CD4-positive, alpha-beta memory T cell (primary cell): ENCODE measurements at regions of chr14 and their contacts with region 1.

Region 1: DNA sequence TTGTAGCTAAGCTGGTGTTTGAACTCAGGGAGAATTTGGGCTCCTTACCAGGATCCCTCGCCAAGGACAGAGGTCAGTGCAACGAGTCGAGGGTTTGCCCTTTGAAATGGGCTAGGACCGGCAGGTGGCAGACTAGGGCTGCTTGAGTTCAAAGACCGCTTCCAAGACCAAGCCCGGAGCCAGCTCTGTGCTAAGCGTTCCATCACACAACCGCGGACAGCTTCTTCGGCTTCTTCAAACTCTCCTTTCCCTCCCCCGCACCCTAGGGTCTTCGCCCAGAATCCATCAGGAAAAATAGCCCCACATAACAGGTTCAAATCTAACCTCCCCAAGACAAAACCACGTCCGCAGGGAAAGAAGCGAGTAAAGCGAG is 705 bp upstream of the FLVCR2 start:
- DNase-seq: peak; percentile 54 to 72 (median 62)
- H3K4me3 ChIP-seq: peak overlapping the region; percentile 60 to 94
- H3K4me3 Mint-ChIP-seq: peak overlapping the region; percentile 90 to 99 (median 95)
- H3K27ac ChIP-seq: peak overlapping the region; percentile 46
- H3K27ac Mint-ChIP-seq: peak overlapping the region; percentile 87 to 96 (median 90)
- H3K4me1 ChIP-seq: peaks cover 22% of the 10 kb centered on the region
- H3K4me1 Mint-ChIP-seq: peaks cover 9 to 15% (median 13%) of the 10 kb centered on the region in 4 donors
- H3K27me3 ChIP-seq: no peaks in the 10 kb centered on the region
- H3K27me3 Mint-ChIP-seq: no peaks in the 10 kb centered on the region

Region 2: DNA sequence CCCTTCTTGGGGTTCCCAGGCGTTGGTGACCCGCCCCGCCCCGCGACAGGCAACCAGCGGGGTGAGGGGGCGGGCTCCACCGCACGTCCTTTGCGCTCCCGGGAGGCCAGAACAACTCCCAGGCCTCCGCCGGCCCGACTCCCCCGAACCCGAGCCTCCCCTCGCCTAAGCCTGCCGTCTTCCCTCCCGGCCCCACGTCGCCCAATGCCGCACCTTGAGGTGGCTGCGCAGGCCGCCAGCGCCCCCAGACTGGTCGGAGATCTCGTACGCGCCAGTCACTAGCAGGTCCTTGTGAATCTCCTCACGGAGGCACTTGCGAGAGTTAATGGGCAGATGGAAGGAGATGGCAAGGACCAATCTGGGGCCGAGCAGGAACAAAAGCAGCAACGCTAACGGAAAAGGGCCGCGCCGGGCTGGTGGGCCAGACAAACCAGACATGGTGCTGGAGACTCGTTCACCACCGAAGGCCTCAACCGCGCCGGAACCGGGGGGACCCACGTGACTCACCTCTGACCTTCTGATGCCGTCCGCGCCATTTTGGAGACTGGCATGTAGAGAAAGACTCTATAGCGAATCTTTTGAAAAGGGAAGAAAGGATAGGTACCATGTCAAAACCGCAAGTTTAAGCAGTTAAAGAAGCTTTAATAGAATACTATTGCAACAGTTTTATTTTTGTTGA is 401.4 kb before region 1 on chr14 and contains the start of gene TMED10:
- CTCF ChIA-PET with region 1: no interaction called
- POLR2A ChIA-PET with region 1: no interaction called
- intact Hi-C with region 1: no loop called
- DNase-seq: peak; percentile 95 to 96 (median 95)
- H3K4me3 ChIP-seq: peak within 1 kb of the TSS; percentile 78 to 84
- H3K4me3 Mint-ChIP-seq: peak within 1 kb of the TSS; percentile 83 to 97 (median 94)
- H3K27ac ChIP-seq: peak within 1 kb of the TSS; percentile 99
- H3K27ac Mint-ChIP-seq: peak within 1 kb of the TSS; percentile 98 to 99 (median 98)
- H3K4me1 ChIP-seq: peaks cover 38% of the 10 kb centered on the region
- H3K4me1 Mint-ChIP-seq: peaks cover 28 to 57% (median 44%) of the 10 kb centered on the region in 4 donors
- H3K27me3 ChIP-seq: no peaks in the 10 kb centered on the region
- H3K27me3 Mint-ChIP-seq: no peaks in the 10 kb centered on the region
- total RNA-seq, gene TMED10: 202 to 217 TPM

Region 3: GRCh38 chr14:75497191-75497590 is 80.5 kb before region 1 on chr14:
- CTCF ChIA-PET with region 1: interaction called, 12 read pairs
- POLR2A ChIA-PET with region 1: interaction called, 3 read pairs
- intact Hi-C with region 1: no loop called
- DNase-seq: no peak
- H3K4me3 ChIP-seq: no peak overlapping the region
- H3K4me3 Mint-ChIP-seq: no peak overlapping the region
- H3K27ac ChIP-seq: no peak overlapping the region
- H3K27ac Mint-ChIP-seq: peak overlapping the region in 3 of 7 donors; percentile 58 to 75 (median 59)
- H3K4me1 ChIP-seq: no peaks in the 10 kb centered on the region
- H3K4me1 Mint-ChIP-seq: peaks cover 4 to 16% (median 8%) of the 10 kb centered on the region in 4 donors
- H3K27me3 ChIP-seq: no peaks in the 10 kb centered on the region
- H3K27me3 Mint-ChIP-seq: no peaks in the 10 kb centered on the region

Region 4: DNA sequence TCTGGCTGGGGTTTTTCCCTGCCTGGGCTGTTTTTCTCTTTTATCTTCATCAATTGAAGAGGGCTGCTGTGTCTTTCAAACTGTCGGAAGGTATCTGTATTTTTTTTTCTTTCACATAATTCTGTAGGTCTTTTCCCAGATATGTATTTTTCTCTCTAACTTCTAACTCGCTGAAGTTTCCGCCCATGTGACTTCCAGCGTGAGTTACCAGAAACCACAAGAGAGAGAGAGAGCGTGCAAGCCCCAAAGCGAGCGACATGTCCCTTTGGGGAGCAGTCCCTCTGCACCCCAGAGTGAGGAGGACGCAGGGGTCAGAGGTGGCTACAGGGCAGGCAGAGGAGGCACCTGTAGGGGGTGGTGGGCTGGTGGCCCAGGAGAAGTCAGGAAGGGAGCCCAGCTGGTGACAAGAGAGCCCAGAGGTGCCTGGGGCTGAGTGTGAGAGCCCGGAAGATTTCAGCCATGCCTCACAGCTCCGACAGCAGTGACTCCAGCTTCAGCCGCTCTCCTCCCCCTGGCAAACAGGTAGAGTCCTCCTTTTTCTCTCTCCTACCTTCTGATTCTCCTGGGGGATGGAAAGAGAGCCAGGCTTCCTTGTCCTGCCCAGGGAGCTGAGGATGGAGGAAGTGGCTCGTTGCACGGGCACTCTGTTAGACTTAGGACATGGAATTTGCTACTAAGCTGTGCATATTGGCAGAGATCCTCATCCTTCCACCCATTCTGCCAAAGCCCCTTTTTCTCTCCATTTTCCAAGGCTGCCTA is 55.3 kb before region 1 on chr14 and contains the start of gene BATF:
- CTCF ChIA-PET with region 1: interaction called, 36 read pairs
- POLR2A ChIA-PET with region 1: interaction called, 5 read pairs
- intact Hi-C with region 1: no loop called
- DNase-seq: peak; percentile 79 to 90 (median 82)
- H3K4me3 ChIP-seq: peak within 1 kb of the TSS; percentile 81 to 90
- H3K4me3 Mint-ChIP-seq: peak within 1 kb of the TSS; percentile 96 to 100 (median 99)
- H3K27ac ChIP-seq: peak within 1 kb of the TSS; percentile 88
- H3K27ac Mint-ChIP-seq: peak within 1 kb of the TSS; percentile 94 to 99 (median 98)
- H3K4me1 ChIP-seq: peaks cover 69% of the 10 kb centered on the region
- H3K4me1 Mint-ChIP-seq: peaks cover 47 to 84% (median 65%) of the 10 kb centered on the region in 4 donors
- H3K27me3 ChIP-seq: no peaks in the 10 kb centered on the region
- H3K27me3 Mint-ChIP-seq: no peaks in the 10 kb centered on the region
- total RNA-seq, gene BATF: 17.1 to 20.6 TPM

Region 5: GRCh38 chr14:75560962-75561432 is 16.7 kb before region 1 on chr14:
- CTCF ChIA-PET with region 1: interaction called, 42 read pairs
- POLR2A ChIA-PET with region 1: interaction called, 12 read pairs
- intact Hi-C with region 1: no loop called
- DNase-seq: peak in 4 of 5 donors; percentile 21 to 40 (median 37)
- H3K4me3 ChIP-seq: no peak overlapping the region
- H3K4me3 Mint-ChIP-seq: peak overlapping the region in 4 of 8 donors; percentile 21 to 62 (median 50)
- H3K27ac ChIP-seq: no peak overlapping the region
- H3K27ac Mint-ChIP-seq: peak overlapping the region in 4 of 7 donors; percentile 13 to 67 (median 48)
- H3K4me1 ChIP-seq: peaks cover 26% of the 10 kb centered on the region
- H3K4me1 Mint-ChIP-seq: peaks cover 21 to 46% (median 28%) of the 10 kb centered on the region in 4 donors
- H3K27me3 ChIP-seq: no peaks in the 10 kb centered on the region
- H3K27me3 Mint-ChIP-seq: peaks cover 0 to 1% of the 10 kb centered on the region in 2 donors

Region 6: GRCh38 chr14:75648066-75648838 is 70.5 kb after region 1 on chr14:
- CTCF ChIA-PET with region 1: interaction called, 388 read pairs
- POLR2A ChIA-PET with region 1: interaction called, 30 read pairs
- intact Hi-C with region 1: no loop called
- DNase-seq: no peak
- H3K4me3 ChIP-seq: no peak overlapping the region
- H3K4me3 Mint-ChIP-seq: no peak overlapping the region
- H3K27ac ChIP-seq: no peak overlapping the region
- H3K27ac Mint-ChIP-seq: peak overlapping the region in 1 of 7 donors; percentile 10
- H3K4me1 ChIP-seq: no peaks in the 10 kb centered on the region
- H3K4me1 Mint-ChIP-seq: peaks cover 0 to 1% (median 0%) of the 10 kb centered on the region in 4 donors
- H3K27me3 ChIP-seq: no peaks in the 10 kb centered on the region
- H3K27me3 Mint-ChIP-seq: no peaks in the 10 kb centered on the region

Region 7: GRCh38 chr14:75660630-75661494 is 83.1 kb after region 1 on chr14 and contains the starts of genes ERG28 and TTLL5:
- CTCF ChIA-PET with region 1: interaction called, 388 read pairs
- POLR2A ChIA-PET with region 1: interaction called, 30 read pairs
- intact Hi-C with region 1: no loop called
- DNase-seq: peak; percentile 97 to 99 (median 98)
- H3K4me3 ChIP-seq: peak within 1 kb of the TSS; percentile 92 to 95
- H3K4me3 Mint-ChIP-seq: peak within 1 kb of the TSS; percentile 93 to 99 (median 96)
- H3K27ac ChIP-seq: peak within 1 kb of the TSS; percentile 88
- H3K27ac Mint-ChIP-seq: peak within 1 kb of the TSS; percentile 96 to 99 (median 98)
- H3K4me1 ChIP-seq: peaks cover 20% of the 10 kb centered on the region
- H3K4me1 Mint-ChIP-seq: peaks cover 12 to 44% (median 28%) of the 10 kb centered on the region in 4 donors
- H3K27me3 ChIP-seq: no peaks in the 10 kb centered on the region
- H3K27me3 Mint-ChIP-seq: no peaks in the 10 kb centered on the region
- total RNA-seq, gene ERG28: 12.9 to 13.9 TPM
- total RNA-seq, gene TTLL5: 25.3 to 28.2 TPM

Region 8: DNA sequence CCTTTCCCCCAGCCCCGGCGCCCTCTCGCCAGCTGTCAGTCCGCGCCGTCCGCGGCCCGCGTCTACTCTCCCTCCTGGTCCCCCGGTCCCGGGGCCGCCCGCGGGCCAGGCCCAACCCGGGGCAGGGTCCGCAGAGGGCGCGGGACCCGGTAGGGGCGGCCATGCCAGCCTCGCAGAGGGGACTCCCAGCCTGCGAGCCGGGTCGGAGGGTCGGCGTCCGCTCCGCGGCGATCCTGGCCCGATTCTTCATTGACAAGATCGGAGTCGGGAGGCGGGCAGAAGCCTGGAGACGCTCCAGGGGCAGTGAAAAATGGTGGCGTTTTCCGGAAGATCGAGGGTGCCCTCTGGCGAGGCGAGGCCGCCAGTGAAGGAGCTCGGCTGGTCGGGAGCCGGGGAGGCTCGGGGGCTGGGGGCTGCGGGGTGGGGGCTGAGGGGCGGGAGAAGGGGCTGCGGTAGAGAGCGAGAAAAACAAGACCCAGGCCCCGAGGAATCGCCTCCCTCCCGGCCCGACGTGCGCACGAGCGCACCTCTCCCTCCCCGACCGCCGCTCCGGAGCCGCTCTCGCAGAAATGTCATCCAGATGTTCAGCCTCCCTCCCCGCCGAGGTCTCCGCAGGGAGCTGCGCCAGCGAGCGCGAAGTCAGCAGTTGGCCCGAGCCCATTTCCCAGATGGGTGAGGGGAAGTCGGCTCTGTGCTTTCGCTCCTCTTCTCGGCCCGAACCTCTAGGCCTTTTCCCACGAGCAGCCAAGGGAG is 404.7 kb after region 1 on chr14:
- CTCF ChIA-PET with region 1: interaction called, 20 read pairs
- POLR2A ChIA-PET with region 1: interaction called, 5 read pairs
- intact Hi-C with region 1: no loop called
- DNase-seq: peak; percentile 79 to 82 (median 80)
- H3K4me3 ChIP-seq: peak overlapping the region; percentile 29 to 72
- H3K4me3 Mint-ChIP-seq: peak overlapping the region; percentile 78 to 93 (median 89)
- H3K27ac ChIP-seq: peak overlapping the region; percentile 71
- H3K27ac Mint-ChIP-seq: peak overlapping the region; percentile 78 to 95 (median 93)
- H3K4me1 ChIP-seq: peaks cover 44% of the 10 kb centered on the region
- H3K4me1 Mint-ChIP-seq: peaks cover 27 to 68% (median 50%) of the 10 kb centered on the region in 4 donors
- H3K27me3 ChIP-seq: no peaks in the 10 kb centered on the region
- H3K27me3 Mint-ChIP-seq: no peaks in the 10 kb centered on the region